BJ (cell line): ENCODE measurements at regions of chr20 and their contacts with region 1.

Region 1: GRCh38 chr20:51562332-51563155 is 20.0 kb upstream of the NFATC2 start:
- DNase-seq: peak; percentile 89
- H3K4me3 ChIP-seq: peak overlapping the region; percentile 37
- H3K27me3 ChIP-seq: no peaks in the 10 kb centered on the region
- CTCF ChIP-seq: 0 out of 2 replicates have a peak, but pooled peaks have one; percentile 6

Region 2: DNA sequence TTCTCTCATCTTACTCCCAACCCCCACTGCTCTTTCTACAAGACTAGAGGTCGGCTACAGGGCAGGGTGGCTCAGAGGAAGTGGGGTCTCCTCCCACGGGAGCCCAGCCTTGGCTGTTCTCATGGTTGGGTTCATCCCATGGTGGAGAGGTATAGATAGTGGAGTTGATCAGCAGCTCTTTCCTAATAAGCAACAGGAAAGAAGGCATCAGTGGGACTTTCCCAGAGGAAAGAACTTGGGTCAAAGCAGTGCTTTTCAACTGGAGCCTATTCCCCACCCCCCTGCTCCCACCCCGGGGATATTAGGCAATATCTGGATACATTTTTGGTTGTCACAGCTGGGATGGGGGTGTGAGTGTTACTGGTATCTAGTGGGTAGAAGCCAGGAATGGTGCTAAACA is 221.0 kb before region 1 on chr20:
- CTCF ChIA-PET with region 1: no interaction called
- POLR2A ChIA-PET with region 1: interaction called, 11 read pairs
- DNase-seq: no peak
- H3K4me3 ChIP-seq: no peak overlapping the region
- H3K27me3 ChIP-seq: no peaks in the 10 kb centered on the region
- CTCF ChIP-seq: no peak